ENCODE measurements at regions of chr22 and their contacts with region 1.

Region 1: GRCh38 chr22:38106637-38107568 is 3.6 kb downstream of the BAIAP2L2 start:
- DNase-seq: no peak
- H3K4me3 ChIP-seq: no peak overlapping the region
- H3K27ac ChIP-seq: peak overlapping the region; percentile 79 to 93 (median 84)
- H3K4me1 ChIP-seq: peaks cover 4 to 41% (median 34%) of the 10 kb centered on the region in 4 donors
- H3K27me3 ChIP-seq: no peaks in the 10 kb centered on the region
- CTCF ChIP-seq: no peak
- EP300 ChIP-seq: no peak
- POLR2A ChIP-seq: no peak

Region 2: DNA sequence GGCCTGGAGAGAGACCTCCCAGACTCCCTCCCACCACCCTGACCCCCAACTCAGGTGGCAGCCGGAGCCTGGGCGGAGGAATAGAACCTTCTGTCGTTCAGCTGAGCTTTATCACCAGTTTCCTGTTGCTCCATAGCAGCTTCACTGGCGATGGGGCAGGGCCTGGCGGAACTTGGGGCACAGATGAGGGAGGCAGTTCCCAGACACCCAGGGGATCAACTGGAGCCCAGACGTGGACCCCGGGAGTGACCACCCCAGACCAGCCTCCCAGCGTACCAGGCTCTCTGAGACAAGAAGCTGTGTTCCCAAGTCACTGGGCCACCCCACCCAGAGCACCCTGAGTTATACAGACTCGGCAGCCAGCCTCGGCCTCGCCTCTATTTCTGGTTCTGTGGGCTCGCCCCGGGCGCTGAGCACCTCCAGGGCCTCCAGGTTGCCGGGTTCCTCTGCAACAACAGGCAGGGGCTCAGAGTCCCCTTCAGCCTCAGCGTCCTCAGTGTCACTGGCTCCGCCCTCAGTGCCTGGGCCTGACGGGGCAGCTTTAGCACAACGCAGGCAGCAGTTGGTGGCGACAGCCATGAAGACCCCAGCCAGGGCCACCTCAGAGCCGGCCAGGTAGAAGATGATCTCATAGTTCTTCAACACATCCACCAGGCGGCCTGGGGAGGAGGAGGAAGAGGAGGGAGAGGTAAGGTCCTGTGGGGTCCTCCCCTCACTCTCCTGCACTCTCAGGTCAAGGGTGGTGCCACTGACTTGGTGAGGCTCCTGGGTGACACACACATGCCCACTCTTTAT is 28.7 kb before region 1 on chr22:
- in situ Hi-C with region 1: no loop called
- intact Hi-C with region 1: loop called (anchors 1 kb)
- DNase-seq: no peak
- H3K4me3 ChIP-seq: no peak overlapping the region
- H3K27ac ChIP-seq: no peak overlapping the region
- H3K4me1 ChIP-seq: peaks cover 4 to 22% (median 21%) of the 10 kb centered on the region in 4 donors
- H3K27me3 ChIP-seq: peaks cover 27% of the 10 kb centered on the region
- CTCF ChIP-seq: no peak
- EP300 ChIP-seq: no peak
- POLR2A ChIP-seq: no peak